ENCODE measurements at regions of chr11 and their contacts with region 1.

Region 1: DNA sequence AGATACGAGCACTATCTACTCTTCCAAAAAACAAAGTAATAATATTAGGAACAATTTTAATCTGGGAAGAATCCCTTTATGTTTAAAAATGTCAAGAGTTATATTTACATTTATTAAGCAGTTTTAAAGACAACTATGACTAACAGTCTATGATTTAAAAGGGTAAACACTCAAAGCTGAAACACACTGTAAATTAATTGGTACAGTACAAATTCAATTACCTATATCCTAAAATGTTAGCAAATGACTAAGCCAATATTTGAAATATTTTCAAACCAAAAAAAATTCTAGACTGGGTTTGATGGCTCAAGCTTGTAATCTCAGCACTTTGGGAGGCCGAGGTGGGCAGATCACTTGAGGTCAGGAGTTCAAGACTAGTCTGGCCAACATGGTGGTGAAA is 36.0 kb upstream of the CHRNA10 start:
- DNase-seq: no peak
- H3K4me3 ChIP-seq: no peak overlapping the region
- H3K27ac ChIP-seq: no peak overlapping the region
- H3K4me1 ChIP-seq: no peaks in the 10 kb centered on the region
- H3K27me3 ChIP-seq: no peaks in the 10 kb centered on the region
- CTCF ChIP-seq: no peak

Region 2: GRCh38 chr11:2992234-2992996 is 714.8 kb before region 1 on chr11 and contains the start of gene NAP1L4:
- CTCF ChIA-PET with region 1: interaction called, 14 read pairs
- POLR2A ChIA-PET with region 1: no interaction called
- intact Hi-C with region 1: no loop called
- DNase-seq: peak; percentile 84 to 91
- H3K4me3 ChIP-seq: peak within 1 kb of the TSS; percentile 85
- H3K27ac ChIP-seq: peak within 1 kb of the TSS; percentile 73
- H3K4me1 ChIP-seq: peaks cover 26% of the 10 kb centered on the region
- H3K27me3 ChIP-seq: no peaks in the 10 kb centered on the region
- CTCF ChIP-seq: no peak
- total RNA-seq, gene NAP1L4: 73.3 and 86.7 TPM in 2 replicates

Region 3: GRCh38 chr11:3685923-3686322 is 21.3 kb before region 1 on chr11:
- CTCF ChIA-PET with region 1: no interaction called
- POLR2A ChIA-PET with region 1: no interaction called
- intact Hi-C with region 1: no loop called
- DNase-seq: no peak
- H3K4me3 ChIP-seq: no peak overlapping the region
- H3K27ac ChIP-seq: no peak overlapping the region
- H3K4me1 ChIP-seq: no peaks in the 10 kb centered on the region
- H3K27me3 ChIP-seq: no peaks in the 10 kb centered on the region
- CTCF ChIP-seq: no peak

Measured in PC-9 (cell line).